ENCODE measurements at regions of chr2 and their contacts with region 1.

Region 1: GRCh38 chr2:113602869-113603466 is 24.1 kb upstream of the RABL2A start:
- DNase-seq: no peak
- ATAC-seq: peak; percentile 86
- H3K4me3 ChIP-seq: peak overlapping the region; percentile 70; the same call in 1 of the 2 replicates
- H3K27ac ChIP-seq: peak overlapping the region; percentile 44; the same call in 1 of the 2 replicates
- H3K4me1 ChIP-seq: no peaks in the 10 kb centered on the region
- H3K27me3 ChIP-seq: no peaks in the 10 kb centered on the region
- CTCF ChIP-seq: no peak
- EP300 ChIP-seq: no peak
- POLR2A ChIP-seq: no peak
- RAD21 ChIP-seq: no peak

Region 2: DNA sequence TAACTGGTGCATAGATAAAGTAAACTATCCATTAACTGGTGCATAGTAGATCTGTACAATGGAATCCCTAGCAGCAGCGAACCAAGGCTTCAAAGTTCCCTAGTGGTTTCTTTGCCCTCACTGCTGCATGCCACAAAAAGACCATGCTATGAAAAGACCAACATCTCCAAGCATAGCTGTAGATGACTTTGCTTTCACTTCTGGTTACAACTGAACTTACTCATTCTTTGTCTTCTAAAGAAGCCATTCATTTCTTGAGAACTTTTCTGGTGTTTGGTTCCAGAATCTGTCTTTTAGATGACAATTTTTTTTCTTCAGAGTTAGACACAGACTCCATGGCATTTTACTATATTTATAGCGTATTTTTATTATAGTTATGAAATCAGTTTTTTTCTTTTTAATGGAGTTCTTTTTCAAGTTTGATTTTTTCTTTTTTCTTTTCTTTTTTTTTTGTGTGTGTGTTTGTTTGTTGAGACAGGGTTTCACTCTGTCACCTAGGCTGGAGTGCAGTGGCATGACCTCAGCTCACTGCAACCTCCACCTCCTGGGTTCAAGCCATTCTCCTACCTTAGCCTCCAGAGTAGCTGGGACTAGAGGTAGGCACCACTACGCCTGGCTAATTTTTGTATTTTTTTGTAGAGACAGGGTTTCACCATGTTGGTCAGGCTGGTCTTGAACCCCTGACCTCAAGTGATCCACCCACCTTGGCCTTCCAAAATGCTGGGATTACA is 89.9 kb after region 1 on chr2:
- CTCF ChIA-PET with region 1: interaction called, 10 read pairs
- POLR2A ChIA-PET with region 1: interaction called, 3 read pairs
- RAD21 ChIA-PET with region 1: interaction called, 12 read pairs
- SMC1A ChIA-PET with region 1: interaction called, 6 read pairs
- in situ Hi-C with region 1: no loop called
- intact Hi-C with region 1: loop called (anchors 2 kb)
- DNase-seq: peak; percentile 78
- ATAC-seq: peak; percentile 85
- H3K4me3 ChIP-seq: peak overlapping the region; percentile 31; the same call in 1 of the 2 replicates
- H3K27ac ChIP-seq: peak overlapping the region; percentile 89
- H3K4me1 ChIP-seq: peaks cover 39% of the 10 kb centered on the region
- H3K27me3 ChIP-seq: no peaks in the 10 kb centered on the region
- CTCF ChIP-seq: no peak
- EP300 ChIP-seq: peak in 1 of 2 experiments; percentile 59; a peak in 1 of 4 replicates
- POLR2A ChIP-seq: no peak
- RAD21 ChIP-seq: 0 out of 2 replicates have a peak, but pooled peaks have one; percentile 22